Heart left ventricle (tissue), 16 donors: ENCODE measurements at regions of chr1 and their contacts with region 1.

Region 1: GRCh38 chr1:33482412-33482811 is 10.0 kb downstream of the ZSCAN20 start:
- DNase-seq: no peak
- ATAC-seq: no peak
- H3K4me3 ChIP-seq: no peak overlapping the region
- H3K27ac ChIP-seq: no peak overlapping the region
- H3K4me1 ChIP-seq: peaks cover 0 to 2% (median 0%) of the 10 kb centered on the region in 12 donors
- H3K27me3 ChIP-seq: no peaks in the 10 kb centered on the region
- CTCF ChIP-seq: no peak
- POLR2A ChIP-seq: no peak

Region 2: GRCh38 chr1:33430692-33431593 is 51.5 kb before region 1 on chr1 and contains the start of gene PHC2:
- intact Hi-C with region 1: no loop called
- DNase-seq: peak; percentile 97 to 99 (median 98)
- ATAC-seq: peak; percentile 96 to 97 (median 97)
- H3K4me3 ChIP-seq: peak within 1 kb of the TSS; percentile 64 to 93 (median 79)
- H3K27ac ChIP-seq: peak within 1 kb of the TSS; percentile 74 to 90 (median 82)
- H3K4me1 ChIP-seq: peaks cover 0 to 70% (median 26%) of the 10 kb centered on the region in 12 donors
- H3K27me3 ChIP-seq: peaks cover 0 to 4% (median 0%) of the 10 kb centered on the region in 9 donors
- CTCF ChIP-seq: peak in 9 of 12 donors; percentile 16 to 70 (median 41)
- POLR2A ChIP-seq: peak; percentile 19 to 56
- total RNA-seq, gene PHC2: 86.5 to 194 (median 99.4) TPM

Region 3: DNA sequence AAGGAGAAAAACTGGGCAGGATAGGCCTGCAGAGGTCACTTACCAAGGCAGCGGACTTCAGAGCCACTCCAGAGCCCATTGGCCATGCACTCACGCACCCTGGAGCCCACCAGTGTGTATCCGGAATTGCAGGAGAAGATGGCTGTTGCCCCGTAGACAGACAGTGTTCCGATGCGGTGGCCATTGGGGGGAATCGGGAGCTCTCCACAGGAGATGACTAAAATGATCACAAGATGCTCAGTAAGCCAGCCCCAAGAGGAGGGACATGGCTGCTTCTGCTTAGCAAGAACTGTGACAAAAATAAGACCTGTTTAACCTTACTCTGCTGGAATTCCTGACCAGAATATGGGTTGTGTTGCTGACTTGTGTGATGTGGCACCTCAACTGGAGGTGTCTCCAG is 86.9 kb after region 1 on chr1:
- intact Hi-C with region 1: loop called in 1 of 10 experiments (anchors 5 kb)
- DNase-seq: no peak
- ATAC-seq: no peak
- H3K4me3 ChIP-seq: no peak overlapping the region
- H3K27ac ChIP-seq: no peak overlapping the region
- H3K4me1 ChIP-seq: peaks cover 0 to 28% (median 11%) of the 10 kb centered on the region in 12 donors
- H3K27me3 ChIP-seq: no peaks in the 10 kb centered on the region
- CTCF ChIP-seq: no peak
- POLR2A ChIP-seq: no peak